Posterior vena cava (tissue), 2 donors: ENCODE measurements at regions of chr10 and their contacts with region 1.

Region 1: DNA sequence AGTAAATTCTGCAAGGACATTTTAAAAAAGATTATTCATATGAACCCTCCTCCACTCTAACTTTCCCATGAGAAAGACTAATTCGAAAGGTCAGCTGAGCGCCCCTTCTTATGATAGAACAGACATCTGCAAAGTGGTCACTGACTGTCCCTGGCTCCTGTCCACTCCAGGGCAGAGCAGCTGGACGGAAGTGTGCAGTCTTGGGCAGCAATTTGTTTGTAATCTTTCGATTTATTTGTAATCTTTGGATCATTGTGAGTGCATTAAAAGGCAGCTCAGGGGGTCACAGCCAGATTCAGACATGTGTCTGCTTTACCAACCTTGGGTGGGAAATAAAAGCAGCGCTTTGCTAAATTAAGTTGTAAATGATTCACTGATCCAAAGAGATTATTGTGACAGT is 158.8 kb upstream of the ADARB2 start:
- DNase-seq: no peak

Region 2: GRCh38 chr10:1858048-1858447 is 38.1 kb before region 1 on chr10:
- intact Hi-C with region 1: loop called in 1 of 2 experiments (anchors 1 kb)
- DNase-seq: no peak

Region 3: DNA sequence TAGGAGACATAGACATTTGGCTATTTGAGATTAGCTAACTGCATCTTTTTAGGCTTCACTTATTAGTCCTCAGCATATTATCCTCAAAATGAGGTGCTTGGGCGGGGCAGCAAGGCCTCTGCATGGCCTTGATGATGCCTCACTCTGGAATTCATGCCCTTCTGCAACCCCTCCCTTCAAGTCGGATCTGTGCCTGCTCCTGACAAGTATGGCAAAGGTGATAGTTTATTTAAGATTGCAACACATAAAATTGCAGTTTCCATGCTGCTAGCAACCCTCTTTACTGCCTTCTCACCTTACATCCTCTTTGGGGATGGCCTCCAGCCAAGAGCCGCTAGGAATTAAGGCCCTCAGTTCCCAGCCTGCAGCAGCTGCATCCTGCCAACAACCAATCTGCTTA is 82.4 kb after region 1 on chr10:
- intact Hi-C with region 1: no loop called
- DNase-seq: no peak

Region 4: DNA sequence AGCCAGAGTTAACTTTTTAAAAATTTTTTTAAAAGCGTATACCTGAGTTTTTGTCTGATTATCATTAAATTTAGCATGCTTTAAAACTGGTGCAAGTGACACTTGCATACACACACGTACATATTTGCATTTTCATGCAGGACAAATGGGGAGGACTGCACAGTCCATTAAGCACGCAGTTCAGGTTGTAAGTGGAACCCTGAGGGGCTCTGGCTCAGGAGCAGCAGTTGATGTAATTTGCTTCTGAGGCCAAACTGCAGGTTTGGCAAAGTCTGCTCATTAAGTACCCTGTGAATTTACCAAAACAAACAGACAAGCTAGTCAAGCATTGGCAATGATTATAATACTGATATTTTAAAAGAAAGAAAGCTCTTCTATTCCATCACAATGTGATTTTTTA is 955.4 kb after region 1 on chr10:
- intact Hi-C with region 1: no loop called
- DNase-seq: no peak